ENCODE measurements at regions of chrX and their contacts with region 1.

Region 1: GRCh38 chrX:40169193-40170101 is 71.7 kb upstream of the BCOR start:
- DNase-seq: peak; percentile 77 to 89 (median 82)
- H3K4me3 ChIP-seq: peak overlapping the region in 1 of 4 donors; percentile 33
- H3K27ac ChIP-seq: peak overlapping the region in 3 of 5 donors; percentile 52 to 96 (median 79)
- H3K4me1 ChIP-seq: peaks cover 18 to 36% of the 10 kb centered on the region in 2 donors
- H3K27me3 ChIP-seq: peaks cover 35% of the 10 kb centered on the region
- CTCF ChIP-seq: peak in 5 of 6 experiments; percentile 33 to 50 (median 43)
- POLR2A ChIP-seq: no peak

Region 2: GRCh38 chrX:39814391-39814790 is 355.1 kb before region 1 on chrX:
- intact Hi-C with region 1: loop called in 1 of 2 experiments (anchors 10 kb)
- DNase-seq: peak in 3 of 7 donors; percentile 50 to 66 (median 54)
- H3K4me3 ChIP-seq: no peak overlapping the region
- H3K27ac ChIP-seq: peak overlapping the region; percentile 62 to 94 (median 84)
- H3K4me1 ChIP-seq: no peaks in the 10 kb centered on the region
- H3K27me3 ChIP-seq: peaks cover 4% of the 10 kb centered on the region
- CTCF ChIP-seq: peak; percentile 15 to 62 (median 46)
- POLR2A ChIP-seq: no peak

Region 3: DNA sequence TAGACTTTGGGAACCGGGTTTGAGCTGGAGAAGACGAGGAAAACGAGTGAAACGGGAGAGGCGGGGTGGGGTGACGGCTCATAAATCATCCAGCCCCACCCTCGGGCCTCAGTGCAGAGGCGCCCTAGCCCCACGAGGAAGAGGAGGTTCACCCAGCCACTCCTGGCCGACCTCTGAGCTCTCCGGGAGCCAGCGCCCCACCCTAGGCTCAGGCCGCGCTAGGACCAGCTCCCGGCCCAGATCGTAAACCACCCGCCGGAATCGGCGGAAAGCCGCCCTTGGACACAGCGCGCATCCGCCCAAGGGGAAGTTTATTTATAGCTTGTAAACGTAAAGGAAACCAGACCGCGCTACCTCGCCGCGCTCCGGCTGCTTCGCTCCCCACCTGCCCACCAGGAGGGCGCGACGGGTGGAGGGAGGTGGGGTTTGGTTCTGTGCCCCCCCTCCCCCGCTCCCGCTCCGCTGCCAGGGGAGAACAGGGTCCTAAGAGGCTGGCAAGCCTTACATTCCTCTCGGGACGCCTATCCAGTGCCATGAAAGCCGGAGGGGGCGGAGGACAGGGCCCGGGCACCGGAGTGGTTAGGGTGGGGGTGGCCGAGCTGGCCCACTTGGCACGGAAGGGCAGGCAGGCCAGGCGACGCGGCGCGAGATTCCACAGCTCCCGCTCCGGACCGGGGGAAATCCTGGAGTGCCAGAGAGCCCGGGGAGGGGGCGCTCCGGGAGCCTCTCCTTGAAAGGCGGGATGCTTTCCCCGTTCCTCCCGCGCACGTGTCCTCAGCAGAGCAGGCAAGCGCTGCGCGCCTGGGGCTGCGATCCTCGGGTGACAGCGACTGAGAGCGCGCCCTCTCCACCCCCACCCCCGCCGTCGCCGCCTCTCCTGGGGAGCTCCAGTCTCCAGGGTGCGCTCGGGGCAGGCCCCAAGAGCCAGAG is 155.9 kb before region 1 on chrX:
- intact Hi-C with region 1: loop called (anchors 5 kb)
- DNase-seq: peak; percentile 58 to 73 (median 65)
- H3K4me3 ChIP-seq: peak overlapping the region in 2 of 4 donors; percentile 37 to 63
- H3K27ac ChIP-seq: peak overlapping the region; percentile 64 to 94 (median 84)
- H3K4me1 ChIP-seq: peaks cover 0 to 13% of the 10 kb centered on the region in 2 donors
- H3K27me3 ChIP-seq: peaks cover 38% of the 10 kb centered on the region
- CTCF ChIP-seq: no peak
- POLR2A ChIP-seq: peak in 1 of 2 donors; percentile 1

Region 4: DNA sequence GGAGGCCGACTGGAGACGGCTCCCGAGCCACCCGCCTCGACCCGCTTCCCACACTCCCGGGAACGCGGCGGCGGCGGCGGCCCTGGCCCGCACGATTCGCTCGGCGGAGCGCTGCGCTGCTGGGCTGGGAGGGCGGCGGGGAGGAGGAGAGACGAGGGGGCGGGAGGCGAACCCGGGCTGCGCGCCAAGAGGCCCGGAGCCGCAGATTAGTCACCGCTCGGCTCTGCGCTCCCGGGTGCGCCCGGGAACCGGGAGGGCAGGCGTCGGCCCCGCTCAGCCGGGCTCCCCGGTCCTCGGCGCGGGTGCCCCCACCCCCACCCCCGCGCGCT is 60.5 kb before region 1 on chrX:
- intact Hi-C with region 1: loop called in 1 of 2 experiments (anchors 5 kb)
- DNase-seq: peak; percentile 77 to 86 (median 85)
- H3K4me3 ChIP-seq: peak overlapping the region in 2 of 4 donors; percentile 36 to 68
- H3K27ac ChIP-seq: peak overlapping the region; percentile 69 to 97 (median 89)
- H3K4me1 ChIP-seq: peaks cover 30 to 51% of the 10 kb centered on the region in 2 donors
- H3K27me3 ChIP-seq: peaks cover 43% of the 10 kb centered on the region
- CTCF ChIP-seq: no peak
- POLR2A ChIP-seq: peak; percentile 43 to 77

Region 5: DNA sequence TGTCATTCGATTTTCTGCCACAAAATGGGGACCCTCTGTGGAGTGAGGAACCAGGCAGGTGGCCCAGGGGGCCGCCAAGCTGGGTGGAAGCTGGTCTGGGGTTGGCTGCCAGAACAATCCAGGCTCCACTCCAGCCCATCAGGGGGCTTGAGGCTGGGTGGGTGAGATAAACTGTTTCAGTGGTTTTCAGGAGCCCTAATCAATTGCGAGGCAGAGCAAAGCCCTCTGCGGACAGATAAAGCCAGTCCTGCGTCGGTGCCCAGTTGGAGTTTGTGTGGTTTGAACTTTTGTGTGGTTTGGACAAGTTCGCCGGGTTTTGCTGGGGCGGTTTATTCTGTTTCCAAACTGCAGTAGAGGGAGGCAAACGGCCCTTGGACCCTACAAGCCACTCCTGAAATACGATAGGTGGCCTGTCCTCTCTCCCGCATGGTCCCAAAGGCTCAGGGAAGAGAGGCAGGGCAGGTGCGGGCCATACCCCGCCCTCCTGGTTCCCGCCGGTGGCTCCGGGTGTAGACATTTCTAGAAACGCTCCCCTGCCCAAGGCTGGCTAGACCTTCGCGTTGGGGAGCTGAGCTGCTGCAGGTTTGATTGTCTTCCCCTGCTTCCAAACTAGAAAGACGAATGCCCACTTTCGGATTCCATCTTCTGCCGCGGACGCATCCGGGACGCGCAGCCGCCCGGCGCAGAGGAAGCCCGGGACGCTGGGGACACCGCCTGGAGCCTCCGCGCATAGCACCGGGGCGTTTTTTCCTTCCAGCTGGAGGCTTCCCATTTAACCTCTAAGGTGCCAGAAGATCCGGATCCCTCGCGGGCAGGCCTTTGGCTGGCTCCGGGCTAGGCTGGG is 97.3 kb after region 1 on chrX:
- intact Hi-C with region 1: loop called in 1 of 2 experiments (anchors 10 kb)
- DNase-seq: peak; percentile 65 to 86 (median 77)
- H3K4me3 ChIP-seq: peak overlapping the region in 2 of 4 donors; percentile 13 to 41
- H3K27ac ChIP-seq: peak overlapping the region; percentile 60 to 90 (median 84)
- H3K4me1 ChIP-seq: peaks cover 12 to 28% of the 10 kb centered on the region in 2 donors
- H3K27me3 ChIP-seq: peaks cover 5% of the 10 kb centered on the region
- CTCF ChIP-seq: peak; percentile 20 to 73 (median 56)
- POLR2A ChIP-seq: peak in 1 of 2 donors; percentile 37

Region 6: GRCh38 chrX:40468033-40468846 is 298.8 kb after region 1 on chrX:
- intact Hi-C with region 1: loop called in 1 of 2 experiments (anchors 10 kb)
- DNase-seq: peak; percentile 42 to 83 (median 65)
- H3K4me3 ChIP-seq: no peak overlapping the region
- H3K27ac ChIP-seq: peak overlapping the region in 2 of 5 donors; percentile 28 to 47
- H3K4me1 ChIP-seq: peaks cover 0 to 12% of the 10 kb centered on the region in 2 donors
- H3K27me3 ChIP-seq: no peaks in the 10 kb centered on the region
- CTCF ChIP-seq: peak; percentile 13 to 56 (median 43)
- POLR2A ChIP-seq: no peak